ENCODE measurements at regions of chr11 and their contacts with region 1.

Region 1: DNA sequence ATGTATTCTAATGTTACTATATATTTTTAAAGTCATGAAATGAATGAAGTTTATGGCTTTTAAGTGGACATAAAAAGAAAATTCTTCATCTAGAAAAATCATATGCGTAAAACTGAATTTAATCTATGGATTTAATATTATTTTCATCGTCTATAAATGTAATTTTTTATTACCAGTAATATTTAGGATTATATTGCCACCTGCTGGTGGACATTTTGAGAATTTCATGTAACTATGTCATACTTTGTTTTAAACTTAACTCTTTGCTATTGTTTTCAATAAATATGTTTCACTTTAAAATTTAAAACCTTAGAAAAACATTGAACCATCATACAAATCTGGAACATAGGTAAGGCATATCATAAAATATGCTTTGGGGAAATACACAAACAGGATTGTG is 66.5 kb upstream of the CEP126 start:
- DNase-seq: no peak
- H3K4me3 ChIP-seq: no peak overlapping the region
- H3K27ac ChIP-seq: no peak overlapping the region
- H3K4me1 ChIP-seq: no peaks in the 10 kb centered on the region
- H3K27me3 ChIP-seq: no peaks in the 10 kb centered on the region
- CTCF ChIP-seq: peak in 3 of 4 experiments; percentile 59 to 70 (median 63)
- POLR2A ChIP-seq: no peak

Region 2: GRCh38 chr11:101456812-101457211 is 391.4 kb before region 1 on chr11:
- intact Hi-C with region 1: loop called (anchors 2 kb)
- DNase-seq: no peak
- H3K4me3 ChIP-seq: no peak overlapping the region
- H3K27ac ChIP-seq: no peak overlapping the region
- H3K4me1 ChIP-seq: no peaks in the 10 kb centered on the region
- H3K27me3 ChIP-seq: no peaks in the 10 kb centered on the region
- CTCF ChIP-seq: peak in 3 of 4 experiments; percentile 30 to 66 (median 64)
- POLR2A ChIP-seq: no peak

Region 3: GRCh38 chr11:102488208-102488607 is 639.9 kb after region 1 on chr11:
- intact Hi-C with region 1: no loop called
- DNase-seq: no peak
- H3K4me3 ChIP-seq: no peak overlapping the region
- H3K27ac ChIP-seq: no peak overlapping the region
- H3K4me1 ChIP-seq: no peaks in the 10 kb centered on the region
- H3K27me3 ChIP-seq: no peaks in the 10 kb centered on the region
- CTCF ChIP-seq: no peak
- POLR2A ChIP-seq: no peak